Dendritic cell treated with granulocyte-macrophage colony-stimulating factor and Interleukin-4, amounts not matched to agents 40 ng/mL and 50 ng/mL, for 4 days (primary cell): ENCODE measurements at regions of chr2 and their contacts with region 1.

Region 1: DNA sequence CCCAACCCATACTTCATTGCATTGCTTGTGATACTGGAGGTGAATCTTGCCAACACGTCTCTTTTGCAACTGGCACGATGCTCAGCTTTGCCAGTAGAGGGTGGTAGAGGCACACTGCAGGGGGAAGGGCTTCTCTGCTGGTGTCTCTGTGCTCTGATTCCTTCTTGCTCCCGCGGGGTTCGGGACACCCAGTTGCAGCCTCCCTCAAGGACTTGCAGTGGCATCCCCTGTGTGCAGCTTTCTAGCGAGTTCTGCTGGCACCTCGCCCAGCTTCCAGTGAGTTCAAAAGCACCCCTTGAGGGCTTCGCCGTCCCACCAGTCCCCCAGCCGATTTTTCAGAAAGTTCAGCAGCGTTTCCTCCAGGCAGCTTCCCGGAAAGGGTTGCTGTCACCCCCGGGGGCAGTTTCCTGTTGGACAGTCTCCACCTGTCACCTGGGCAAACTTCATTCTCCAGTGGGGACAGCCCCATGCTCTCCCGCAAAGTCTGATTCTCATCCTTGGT is 35.3 kb upstream of the EN1 start:
- H3K4me3 Mint-ChIP-seq: peak overlapping the region; percentile 68
- H3K27ac Mint-ChIP-seq: no peak overlapping the region
- H3K4me1 Mint-ChIP-seq: peaks cover 25% of the 10 kb centered on the region
- H3K27me3 Mint-ChIP-seq: peaks cover 26% of the 10 kb centered on the region

Region 2: GRCh38 chr2:118774458-118775133 is 108.2 kb before region 1 on chr2:
- intact Hi-C with region 1: no loop called
- H3K4me3 Mint-ChIP-seq: no peak overlapping the region
- H3K27ac Mint-ChIP-seq: no peak overlapping the region
- H3K4me1 Mint-ChIP-seq: no peaks in the 10 kb centered on the region
- H3K27me3 Mint-ChIP-seq: peaks cover 47% of the 10 kb centered on the region

Region 3: DNA sequence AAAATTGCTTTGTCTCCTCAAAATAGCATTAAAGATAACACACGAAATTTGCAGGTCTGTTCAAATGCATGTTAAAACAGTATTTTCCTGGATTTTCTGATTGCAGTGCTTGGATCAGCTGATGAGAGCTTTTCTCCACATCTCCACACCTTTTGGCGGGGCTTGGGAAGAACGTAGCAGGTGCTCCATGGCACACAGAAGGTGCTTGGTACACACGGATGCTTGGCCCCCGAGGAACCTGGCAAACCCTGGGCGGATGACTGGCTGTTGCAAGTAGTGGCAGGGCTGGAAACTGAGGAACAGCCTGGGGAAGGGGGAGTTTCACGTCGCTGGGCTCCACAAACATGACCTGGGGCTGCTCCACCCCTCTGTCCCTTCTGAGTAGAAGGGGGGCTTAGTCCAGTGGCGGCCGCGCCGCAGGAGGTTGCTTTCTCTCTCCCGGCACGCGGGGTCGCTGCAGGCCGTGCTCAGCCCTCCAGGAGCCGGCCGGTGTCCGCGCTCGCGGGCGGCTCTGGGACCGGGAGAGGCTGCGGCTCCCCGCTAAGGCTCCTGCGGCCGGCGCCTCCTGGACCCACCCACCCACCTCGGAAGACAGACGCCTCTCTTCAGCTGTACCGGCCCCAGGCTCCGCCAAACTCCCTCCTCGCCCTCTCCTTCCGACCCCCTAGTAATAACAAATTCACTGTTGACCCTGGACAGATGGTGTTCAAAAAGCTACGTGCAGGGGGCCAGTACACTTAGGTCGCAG is 128.6 kb after region 1 on chr2:
- intact Hi-C with region 1: loop called (anchors 1 kb)
- H3K4me3 Mint-ChIP-seq: no peak overlapping the region
- H3K27ac Mint-ChIP-seq: no peak overlapping the region
- H3K4me1 Mint-ChIP-seq: peaks cover 33% of the 10 kb centered on the region
- H3K27me3 Mint-ChIP-seq: peaks cover 47% of the 10 kb centered on the region

Region 4: GRCh38 chr2:119126650-119127049 is 243.9 kb after region 1 on chr2:
- intact Hi-C with region 1: loop called (anchors 1 kb)
- H3K4me3 Mint-ChIP-seq: no peak overlapping the region
- H3K27ac Mint-ChIP-seq: no peak overlapping the region
- H3K4me1 Mint-ChIP-seq: no peaks in the 10 kb centered on the region
- H3K27me3 Mint-ChIP-seq: peaks cover 55% of the 10 kb centered on the region

Region 5: GRCh38 chr2:119174216-119175037 is 291.7 kb after region 1 on chr2:
- intact Hi-C with region 1: loop called (anchors 1 kb)
- H3K4me3 Mint-ChIP-seq: no peak overlapping the region
- H3K27ac Mint-ChIP-seq: no peak overlapping the region
- H3K4me1 Mint-ChIP-seq: no peaks in the 10 kb centered on the region
- H3K27me3 Mint-ChIP-seq: peaks cover 7% of the 10 kb centered on the region

Region 6: DNA sequence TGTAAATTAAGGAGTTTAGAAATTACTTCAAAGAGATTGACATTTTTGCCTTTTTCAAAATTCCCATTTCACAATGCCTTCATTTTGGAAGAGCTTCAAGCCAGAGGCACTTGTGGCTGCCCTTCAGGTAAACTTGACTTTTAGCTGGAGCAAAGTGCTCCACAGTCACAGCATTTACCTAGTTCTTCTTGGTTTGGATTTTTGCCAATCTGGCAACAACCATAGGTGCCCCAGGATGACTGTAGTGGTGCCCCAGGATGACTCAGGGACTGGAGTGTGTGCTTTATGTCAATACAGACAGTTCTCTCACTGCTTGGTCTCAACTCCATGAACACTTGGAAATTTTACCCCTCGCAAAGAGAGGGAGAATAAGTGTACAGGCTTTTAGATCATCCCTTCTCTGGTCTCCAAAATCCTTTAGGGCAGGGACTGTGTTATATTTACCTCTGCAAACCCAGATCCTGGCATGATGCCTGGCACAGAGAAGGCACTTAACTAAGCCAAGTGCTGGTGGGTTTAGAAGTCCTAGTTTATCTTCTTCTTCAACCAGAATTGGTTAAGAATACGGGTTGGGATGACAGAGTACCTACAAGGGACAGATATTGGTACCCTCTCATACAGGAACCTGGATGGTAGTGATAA is 861.7 kb after region 1 on chr2:
- intact Hi-C with region 1: no loop called
- H3K4me3 Mint-ChIP-seq: no peak overlapping the region
- H3K27ac Mint-ChIP-seq: no peak overlapping the region
- H3K4me1 Mint-ChIP-seq: peaks cover 6% of the 10 kb centered on the region
- H3K27me3 Mint-ChIP-seq: no peaks in the 10 kb centered on the region